Gastrocnemius medialis (tissue), 4 donors: ENCODE measurements at regions of chr22 and their contacts with region 1.

Region 1: GRCh38 chr22:33504941-33505625 is 415.2 kb downstream of the LARGE1 start:
- DNase-seq: no peak
- ATAC-seq: peak; percentile 50 to 53
- H3K4me3 ChIP-seq: no peak overlapping the region
- H3K27ac ChIP-seq: no peak overlapping the region
- H3K4me1 ChIP-seq: peaks cover 0 to 8% of the 10 kb centered on the region in 2 donors
- H3K27me3 ChIP-seq: no peaks in the 10 kb centered on the region
- CTCF ChIP-seq: no peak
- POLR2A ChIP-seq: no peak

Region 2: DNA sequence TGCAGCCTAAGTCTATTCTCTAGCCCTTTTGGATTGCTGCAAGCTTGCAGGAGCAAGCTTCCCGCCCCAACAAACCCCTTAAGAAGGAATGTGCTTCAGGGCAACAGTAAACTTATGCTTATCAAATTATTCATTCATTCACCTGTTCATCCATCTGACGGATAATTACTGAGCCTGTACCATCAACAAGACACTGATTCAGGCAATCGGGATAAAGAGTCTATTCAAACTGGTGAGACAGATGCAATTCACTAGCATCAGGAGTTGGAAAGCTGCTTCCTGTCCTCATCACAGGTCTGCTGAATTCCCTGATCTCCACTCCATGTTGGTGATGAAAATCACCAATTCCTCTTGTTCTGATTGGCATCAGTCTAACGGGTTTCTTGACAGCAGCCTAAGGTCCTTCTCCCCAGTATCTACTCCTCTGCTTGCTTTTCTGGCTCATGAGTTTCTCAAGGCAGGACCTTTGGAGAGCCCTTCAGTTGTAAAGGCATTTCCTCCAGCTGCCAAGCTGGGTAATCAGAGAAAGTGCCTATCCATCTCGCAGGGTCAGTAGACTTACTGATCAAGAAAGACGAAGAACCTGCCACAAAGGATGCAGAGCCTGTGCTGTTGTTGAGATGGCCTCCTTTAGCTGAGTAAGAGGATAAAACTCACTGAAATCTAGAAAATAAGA is 17.9 kb before region 1 on chr22:
- in situ Hi-C with region 1: no loop called
- intact Hi-C with region 1: no loop called
- DNase-seq: no peak
- ATAC-seq: no peak
- H3K4me3 ChIP-seq: no peak overlapping the region
- H3K27ac ChIP-seq: no peak overlapping the region
- H3K4me1 ChIP-seq: no peaks in the 10 kb centered on the region
- H3K27me3 ChIP-seq: no peaks in the 10 kb centered on the region
- CTCF ChIP-seq: no peak
- POLR2A ChIP-seq: no peak

Region 3: DNA sequence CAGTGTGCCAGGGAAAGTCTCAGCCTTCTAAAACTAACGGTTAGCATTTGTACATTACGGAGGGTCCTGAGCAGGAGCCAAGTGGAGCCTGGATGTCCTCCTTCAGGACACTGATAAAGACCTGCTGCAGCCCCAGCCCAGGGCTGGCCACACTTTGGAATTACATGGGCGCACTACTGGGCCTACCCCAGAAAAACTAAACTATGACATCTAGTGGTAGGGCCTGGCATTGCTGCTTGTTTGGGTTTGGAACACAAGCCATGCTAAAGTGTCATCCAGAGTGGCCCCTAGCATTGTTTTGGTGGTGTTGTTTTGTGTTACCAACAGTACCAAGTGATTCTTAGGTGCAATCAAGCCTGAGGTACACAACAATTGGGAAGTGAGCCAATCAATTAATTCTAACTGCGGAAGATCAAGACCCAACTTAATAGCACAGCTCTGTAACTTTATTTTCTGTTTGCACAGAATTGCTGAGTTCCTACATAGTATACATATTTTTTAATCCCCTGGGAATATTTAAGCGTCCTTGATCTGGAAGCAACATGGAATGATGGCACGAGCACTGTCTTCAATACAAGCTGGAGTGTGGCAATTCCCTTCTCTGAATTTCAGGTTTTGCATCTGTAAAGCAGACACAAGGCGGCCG is 74.5 kb after region 1 on chr22:
- in situ Hi-C with region 1: loop called in 1 of 4 experiments (anchors 10 kb)
- intact Hi-C with region 1: no loop called
- DNase-seq: peak in 1 of 2 donors; percentile 34
- ATAC-seq: peak; percentile 70 to 87
- H3K4me3 ChIP-seq: no peak overlapping the region
- H3K27ac ChIP-seq: no peak overlapping the region
- H3K4me1 ChIP-seq: peaks cover 0 to 9% of the 10 kb centered on the region in 2 donors
- H3K27me3 ChIP-seq: no peaks in the 10 kb centered on the region
- CTCF ChIP-seq: peak; percentile 84 to 94 (median 86)
- POLR2A ChIP-seq: no peak